Naive thymus-derived CD4-positive, alpha-beta T cell (primary cell): ENCODE measurements at regions of chr14 and their contacts with region 1.

Region 1: GRCh38 chr14:24123508-24124417 is 6.7 kb upstream of the FITM1 start:
- DNase-seq: no peak
- ATAC-seq: peak; percentile 38
- H3K4me3 ChIP-seq: no peak overlapping the region
- H3K4me3 Mint-ChIP-seq: no peak overlapping the region
- H3K27ac ChIP-seq: no peak overlapping the region
- H3K27ac Mint-ChIP-seq: peak overlapping the region in 7 of 9 donors; percentile 27 to 52 (median 40)
- H3K4me1 ChIP-seq: no peaks in the 10 kb centered on the region
- H3K4me1 Mint-ChIP-seq: peaks cover 0 to 11% (median 5%) of the 10 kb centered on the region in 7 donors
- H3K27me3 ChIP-seq: no peaks in the 10 kb centered on the region
- H3K27me3 Mint-ChIP-seq: no peaks in the 10 kb centered on the region

Region 2: GRCh38 chr14:24135834-24136542 is 12.2 kb after region 1 on chr14 and contains the start of gene PSME1:
- CTCF ChIA-PET with region 1: interaction called, 4 read pairs
- POLR2A ChIA-PET with region 1: interaction called, 298 read pairs
- intact Hi-C with region 1: loop called in 1 of 2 experiments (anchors 1 kb)
- DNase-seq: peak; percentile 88 to 97 (median 92)
- ATAC-seq: peak; percentile 99
- H3K4me3 ChIP-seq: peak within 1 kb of the TSS; percentile 83
- H3K4me3 Mint-ChIP-seq: peak within 1 kb of the TSS; percentile 88 to 95 (median 92)
- H3K27ac ChIP-seq: peak within 1 kb of the TSS; percentile 97
- H3K27ac Mint-ChIP-seq: peak within 1 kb of the TSS; percentile 86 to 98 (median 93)
- H3K4me1 ChIP-seq: peaks cover 16 to 37% of the 10 kb centered on the region in 2 donors
- H3K4me1 Mint-ChIP-seq: peaks cover 48 to 71% (median 64%) of the 10 kb centered on the region in 7 donors
- H3K27me3 ChIP-seq: no peaks in the 10 kb centered on the region
- H3K27me3 Mint-ChIP-seq: no peaks in the 10 kb centered on the region
- total RNA-seq, gene PSME1: 189 to 583 (median 202) TPM

Region 3: GRCh38 chr14:24188251-24189058 is 64.7 kb after region 1 on chr14 and contains the start of gene IPO4:
- CTCF ChIA-PET with region 1: no interaction called
- POLR2A ChIA-PET with region 1: no interaction called
- intact Hi-C with region 1: no loop called
- DNase-seq: peak; percentile 75 to 97 (median 94)
- ATAC-seq: peak; percentile 97
- H3K4me3 ChIP-seq: peak within 1 kb of the TSS; percentile 89
- H3K4me3 Mint-ChIP-seq: peak within 1 kb of the TSS; percentile 89 to 96 (median 90)
- H3K27ac ChIP-seq: peak within 1 kb of the TSS; percentile 83
- H3K27ac Mint-ChIP-seq: peak within 1 kb of the TSS; percentile 82 to 96 (median 92)
- H3K4me1 ChIP-seq: peaks cover 15 to 16% of the 10 kb centered on the region in 2 donors
- H3K4me1 Mint-ChIP-seq: peaks cover 24 to 53% (median 47%) of the 10 kb centered on the region in 7 donors
- H3K27me3 ChIP-seq: no peaks in the 10 kb centered on the region
- H3K27me3 Mint-ChIP-seq: no peaks in the 10 kb centered on the region
- total RNA-seq, gene IPO4: 21.5 to 45.2 (median 42.2) TPM